CD4-positive, alpha-beta memory T cell (primary cell): ENCODE measurements at regions of chr21 and their contacts with region 1.

Region 1: DNA sequence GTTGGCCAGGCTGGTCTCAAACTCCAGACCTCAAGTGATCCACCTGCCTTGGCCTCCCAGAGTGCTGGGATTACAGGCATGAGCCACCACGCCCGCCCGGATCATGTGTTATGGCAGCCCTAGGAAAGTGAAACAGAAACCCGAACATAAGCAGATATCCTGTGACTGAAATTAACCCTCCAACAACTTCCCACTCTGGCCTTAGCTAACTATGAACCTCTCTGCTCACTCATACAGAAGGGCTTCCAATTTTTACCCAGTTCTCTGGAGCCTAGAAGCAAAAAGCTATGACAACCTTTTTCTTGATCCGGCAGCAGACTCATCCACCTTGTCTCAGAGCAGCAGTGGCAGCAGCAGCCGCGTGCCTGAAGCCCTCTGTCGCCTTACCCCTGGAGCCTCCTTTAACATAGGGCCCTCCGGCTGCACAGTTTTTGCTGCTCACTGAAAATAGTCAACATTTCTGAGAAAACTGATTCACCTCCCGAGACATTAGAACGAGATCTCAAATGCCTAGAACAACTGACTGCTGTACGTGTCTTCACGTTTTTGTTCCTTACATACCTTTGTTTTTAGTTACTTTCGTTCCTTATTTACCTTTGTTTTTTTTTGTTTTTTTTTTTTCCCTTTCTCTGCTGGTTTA is 9.3 kb downstream of the CBR1 start:
- DNase-seq: peak in 4 of 5 donors; percentile 42 to 56 (median 52)
- H3K4me3 ChIP-seq: peak overlapping the region in 1 of 2 donors; percentile 50
- H3K4me3 Mint-ChIP-seq: peak overlapping the region; percentile 21 to 90 (median 82)
- H3K27ac ChIP-seq: peak overlapping the region; percentile 40
- H3K27ac Mint-ChIP-seq: peak overlapping the region; percentile 32 to 95 (median 92)
- H3K4me1 ChIP-seq: peaks cover 17% of the 10 kb centered on the region
- H3K4me1 Mint-ChIP-seq: peaks cover 11 to 28% (median 21%) of the 10 kb centered on the region in 4 donors
- H3K27me3 ChIP-seq: no peaks in the 10 kb centered on the region
- H3K27me3 Mint-ChIP-seq: no peaks in the 10 kb centered on the region

Region 2: GRCh38 chr21:34574601-34575529 is 1504.3 kb before region 1 on chr21:
- CTCF ChIA-PET with region 1: no interaction called
- POLR2A ChIA-PET with region 1: no interaction called
- intact Hi-C with region 1: no loop called
- DNase-seq: no peak
- H3K4me3 ChIP-seq: no peak overlapping the region
- H3K4me3 Mint-ChIP-seq: no peak overlapping the region
- H3K27ac ChIP-seq: no peak overlapping the region
- H3K27ac Mint-ChIP-seq: no peak overlapping the region
- H3K4me1 ChIP-seq: no peaks in the 10 kb centered on the region
- H3K4me1 Mint-ChIP-seq: peaks cover 0 to 3% (median under 1%) of the 10 kb centered on the region in 4 donors
- H3K27me3 ChIP-seq: no peaks in the 10 kb centered on the region
- H3K27me3 Mint-ChIP-seq: no peaks in the 10 kb centered on the region

Region 3: GRCh38 chr21:36060159-36060921 is 18.8 kb before region 1 on chr21 and contains the start of gene SETD4:
- CTCF ChIA-PET with region 1: interaction called, 5 read pairs
- POLR2A ChIA-PET with region 1: interaction called, 19 read pairs
- intact Hi-C with region 1: no loop called
- DNase-seq: peak; percentile 91 to 95 (median 93)
- H3K4me3 ChIP-seq: peak within 1 kb of the TSS; percentile 94 to 98
- H3K4me3 Mint-ChIP-seq: peak within 1 kb of the TSS; percentile 93 to 99 (median 96)
- H3K27ac ChIP-seq: peak within 1 kb of the TSS; percentile 83
- H3K27ac Mint-ChIP-seq: peak within 1 kb of the TSS; percentile 98 to 99 (median 98)
- H3K4me1 ChIP-seq: peaks cover 13% of the 10 kb centered on the region
- H3K4me1 Mint-ChIP-seq: peaks cover 6 to 34% (median 14%) of the 10 kb centered on the region in 4 donors
- H3K27me3 ChIP-seq: no peaks in the 10 kb centered on the region
- H3K27me3 Mint-ChIP-seq: no peaks in the 10 kb centered on the region
- total RNA-seq, gene SETD4: 30.3 to 31.0 TPM

Region 4: GRCh38 chr21:36092676-36093075 is 13.5 kb after region 1 on chr21:
- CTCF ChIA-PET with region 1: no interaction called
- POLR2A ChIA-PET with region 1: no interaction called
- intact Hi-C with region 1: no loop called
- DNase-seq: no peak
- H3K4me3 ChIP-seq: no peak overlapping the region
- H3K4me3 Mint-ChIP-seq: no peak overlapping the region
- H3K27ac ChIP-seq: no peak overlapping the region
- H3K27ac Mint-ChIP-seq: no peak overlapping the region
- H3K4me1 ChIP-seq: no peaks in the 10 kb centered on the region
- H3K4me1 Mint-ChIP-seq: no peaks in the 10 kb centered on the region
- H3K27me3 ChIP-seq: no peaks in the 10 kb centered on the region
- H3K27me3 Mint-ChIP-seq: no peaks in the 10 kb centered on the region